Testis (tissue), 5 donors: ENCODE measurements at regions of chr9 and their contacts with region 1.

Region 1: DNA sequence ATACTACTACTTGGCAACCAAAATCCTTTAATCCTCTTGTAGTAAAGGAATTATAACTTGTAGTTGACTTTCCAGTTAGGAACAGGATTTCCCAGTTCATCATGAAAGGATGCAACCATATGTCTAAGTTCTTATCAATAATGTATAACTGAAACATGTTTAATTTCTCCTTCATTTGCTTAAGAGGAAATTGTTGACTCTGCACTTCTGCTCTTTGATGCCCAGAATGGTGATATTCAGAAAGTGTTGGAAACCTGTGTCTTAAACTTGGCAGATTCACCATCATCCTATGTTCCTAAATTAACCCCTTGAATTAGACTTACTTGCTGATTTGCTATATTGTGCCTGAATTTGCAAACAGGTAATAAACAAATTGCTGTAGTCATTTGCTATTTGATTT is 201.5 kb downstream of the PTPRD start:
- DNase-seq: no peak
- H3K4me3 ChIP-seq: no peak overlapping the region
- H3K27ac ChIP-seq: no peak overlapping the region
- H3K4me1 ChIP-seq: no peaks in the 10 kb centered on the region
- H3K27me3 ChIP-seq: no peaks in the 10 kb centered on the region
- CTCF ChIP-seq: no peak
- POLR2A ChIP-seq: no peak

Region 2: GRCh38 chr9:10346765-10347164 is 64.5 kb before region 1 on chr9:
- intact Hi-C with region 1: no loop called
- DNase-seq: no peak
- H3K4me3 ChIP-seq: no peak overlapping the region
- H3K27ac ChIP-seq: no peak overlapping the region
- H3K4me1 ChIP-seq: no peaks in the 10 kb centered on the region
- H3K27me3 ChIP-seq: no peaks in the 10 kb centered on the region
- CTCF ChIP-seq: no peak
- POLR2A ChIP-seq: no peak

Region 3: GRCh38 chr9:10479172-10479571 is 67.9 kb after region 1 on chr9:
- intact Hi-C with region 1: loop called (anchors 10 kb)
- DNase-seq: no peak
- H3K4me3 ChIP-seq: no peak overlapping the region
- H3K27ac ChIP-seq: no peak overlapping the region
- H3K4me1 ChIP-seq: no peaks in the 10 kb centered on the region
- H3K27me3 ChIP-seq: no peaks in the 10 kb centered on the region
- CTCF ChIP-seq: peak in 1 of 3 experiments; percentile 24
- POLR2A ChIP-seq: no peak

Region 4: DNA sequence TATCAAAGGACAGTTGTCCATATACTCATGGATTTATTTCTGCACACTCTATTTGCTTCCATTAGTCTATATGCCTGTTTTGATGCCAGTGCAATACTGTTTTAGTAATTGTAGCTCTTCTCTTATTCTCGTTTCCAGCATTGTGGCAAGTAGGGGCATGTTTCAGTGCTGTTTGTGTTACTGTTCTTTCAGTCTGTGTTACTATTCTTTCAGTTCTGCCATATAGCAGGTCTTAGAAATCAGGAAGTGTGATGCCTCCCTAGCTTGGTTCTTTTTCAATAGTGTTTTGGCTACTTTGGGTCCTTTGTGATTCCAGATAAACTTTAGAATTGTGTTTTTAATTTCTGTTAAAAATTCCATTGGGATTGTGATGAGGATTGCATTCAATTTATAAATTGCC is 382.0 kb after region 1 on chr9:
- intact Hi-C with region 1: no loop called
- DNase-seq: no peak
- H3K4me3 ChIP-seq: no peak overlapping the region
- H3K27ac ChIP-seq: no peak overlapping the region
- H3K4me1 ChIP-seq: no peaks in the 10 kb centered on the region
- H3K27me3 ChIP-seq: no peaks in the 10 kb centered on the region
- CTCF ChIP-seq: no peak
- POLR2A ChIP-seq: no peak

Region 5: GRCh38 chr9:11431490-11431889 is 1020.2 kb after region 1 on chr9:
- intact Hi-C with region 1: no loop called
- DNase-seq: no peak
- H3K4me3 ChIP-seq: no peak overlapping the region
- H3K27ac ChIP-seq: no peak overlapping the region
- H3K4me1 ChIP-seq: no peaks in the 10 kb centered on the region
- H3K27me3 ChIP-seq: no peaks in the 10 kb centered on the region
- CTCF ChIP-seq: no peak
- POLR2A ChIP-seq: no peak